Tibial artery (tissue), 4 donors: ENCODE measurements at regions of chr5 and their contacts with region 1.

Region 1: GRCh38 chr5:174311531-174312269 is 266.2 kb downstream of the NSG2 start:
- DNase-seq: peak in 1 of 2 donors; percentile 54
- H3K4me3 ChIP-seq: peak overlapping the region; percentile 30 to 51
- H3K27ac ChIP-seq: no peak overlapping the region
- H3K4me1 ChIP-seq: peaks cover 0 to 14% (median 11%) of the 10 kb centered on the region in 4 donors
- H3K27me3 ChIP-seq: peaks cover 0 to 58% of the 10 kb centered on the region in 2 donors
- CTCF ChIP-seq: peak; percentile 77 to 84

Region 2: GRCh38 chr5:173623296-173623771 is 688.4 kb before region 1 on chr5:
- intact Hi-C with region 1: loop called (anchors 5 kb)
- DNase-seq: no peak
- H3K4me3 ChIP-seq: no peak overlapping the region
- H3K27ac ChIP-seq: no peak overlapping the region
- H3K4me1 ChIP-seq: no peaks in the 10 kb centered on the region
- H3K27me3 ChIP-seq: peaks cover 0 to 20% of the 10 kb centered on the region in 2 donors
- CTCF ChIP-seq: no peak

Region 3: GRCh38 chr5:174045470-174046025 is 266.2 kb before region 1 on chr5 and contains the start of gene NSG2:
- intact Hi-C with region 1: loop called (anchors 5 kb)
- DNase-seq: peak in 1 of 2 donors; percentile 44
- H3K4me3 ChIP-seq: no peak within 1 kb of the TSS
- H3K27ac ChIP-seq: no peak within 1 kb of the TSS
- H3K4me1 ChIP-seq: no peaks in the 10 kb centered on the region
- H3K27me3 ChIP-seq: peaks cover 0 to 6% of the 10 kb centered on the region in 2 donors
- CTCF ChIP-seq: no peak

Region 4: DNA sequence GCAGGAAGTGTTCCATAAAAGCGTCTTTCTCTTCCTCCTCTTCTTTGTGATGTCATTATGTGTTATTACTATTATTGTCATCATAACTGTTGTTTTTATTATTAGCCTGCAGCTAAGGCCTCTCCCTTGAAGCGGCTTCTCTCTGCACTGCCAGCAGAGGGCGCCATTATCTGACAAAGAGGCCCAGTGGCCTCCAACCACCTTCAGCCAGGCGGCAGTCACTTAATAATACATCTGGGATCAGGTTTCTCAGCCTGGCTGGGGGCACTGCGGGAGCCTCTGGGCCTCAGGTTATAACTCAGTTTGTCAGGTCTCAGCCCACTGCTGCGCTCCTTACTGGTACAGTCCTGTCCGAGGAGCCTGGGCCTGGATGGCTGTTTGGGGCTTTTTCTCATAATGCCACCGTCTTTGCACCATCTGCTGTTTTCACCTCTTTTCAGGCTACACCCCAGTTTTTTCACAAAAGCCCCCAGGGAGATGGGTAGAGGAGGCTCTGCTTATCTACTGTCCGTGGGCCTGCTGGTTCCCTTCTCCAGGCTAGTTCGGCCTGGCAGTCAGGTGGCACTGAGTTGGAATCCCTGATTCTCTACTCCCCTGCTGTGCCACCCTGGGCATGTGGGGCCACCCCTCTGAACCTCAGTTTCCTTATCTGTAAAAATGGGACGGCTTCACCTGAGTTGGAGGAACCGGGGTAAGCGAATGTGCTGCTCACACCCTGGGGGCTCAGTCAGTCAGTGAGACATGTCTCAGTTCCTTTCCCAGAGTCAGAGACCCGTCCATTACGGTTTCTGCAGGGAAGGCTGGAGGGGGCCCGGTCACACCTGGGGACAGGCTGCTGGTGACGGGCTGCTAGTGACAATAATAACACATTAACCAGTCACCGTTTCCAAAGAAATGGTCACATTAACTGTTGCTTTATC is 15.9 kb after region 1 on chr5:
- intact Hi-C with region 1: no loop called
- DNase-seq: peak in 1 of 2 donors; percentile 41
- H3K4me3 ChIP-seq: no peak overlapping the region
- H3K27ac ChIP-seq: no peak overlapping the region
- H3K4me1 ChIP-seq: no peaks in the 10 kb centered on the region
- H3K27me3 ChIP-seq: peaks cover 0 to 23% of the 10 kb centered on the region in 2 donors
- CTCF ChIP-seq: peak; percentile 35 to 38